ENCODE measurements at regions of chr15 and their contacts with region 1.

Region 1: DNA sequence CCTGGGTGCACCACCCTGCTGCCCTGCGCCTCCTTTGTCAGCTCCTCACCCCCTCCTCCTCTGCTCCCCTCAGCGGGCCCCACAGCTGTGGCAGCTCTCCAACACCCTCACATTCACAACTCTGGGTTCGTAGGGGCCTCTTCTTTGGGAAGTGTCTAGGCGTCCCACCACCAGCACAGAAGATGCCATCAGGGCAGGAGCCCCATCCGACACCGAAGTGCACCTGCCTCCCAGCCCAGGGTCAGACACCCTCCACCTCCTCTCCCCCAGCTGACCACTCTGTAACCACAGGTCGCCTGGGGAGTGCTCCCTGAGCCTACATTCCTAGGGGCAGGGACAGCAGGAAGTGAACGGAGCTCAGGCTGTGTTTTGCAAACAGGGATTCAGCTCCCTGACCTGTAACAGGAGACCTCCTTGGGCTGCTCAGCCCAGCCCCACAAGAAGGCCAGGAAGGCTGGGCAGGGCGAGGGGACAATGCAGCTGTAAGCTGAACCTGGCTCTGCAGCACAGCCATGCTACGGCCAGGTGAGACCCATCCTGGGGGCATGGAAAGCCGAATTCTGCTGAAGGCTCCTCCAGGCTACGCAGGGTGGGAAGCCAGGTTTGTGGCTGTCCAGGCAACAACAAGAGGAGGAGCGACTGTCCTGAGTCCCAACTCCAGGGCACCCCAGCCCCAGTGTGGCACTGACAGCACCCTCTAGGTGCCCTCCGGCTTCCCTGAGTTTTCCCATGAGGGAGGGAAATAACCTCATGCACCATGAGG is 269.0 kb downstream of the GOLGA6L6 start:
- DNase-seq: no peak
- ATAC-seq: no peak
- H3K4me3 ChIP-seq: no peak overlapping the region
- H3K4me3 Mint-ChIP-seq: no peak overlapping the region
- H3K27ac ChIP-seq: no peak overlapping the region
- H3K27ac Mint-ChIP-seq: no peak overlapping the region
- H3K4me1 ChIP-seq: no peaks in the 10 kb centered on the region
- H3K4me1 Mint-ChIP-seq: no peaks in the 10 kb centered on the region
- H3K27me3 ChIP-seq: peaks cover 0 to 9% of the 10 kb centered on the region in 2 experiments
- H3K27me3 Mint-ChIP-seq: no peaks in the 10 kb centered on the region
- CTCF ChIP-seq: no peak

Region 2: DNA sequence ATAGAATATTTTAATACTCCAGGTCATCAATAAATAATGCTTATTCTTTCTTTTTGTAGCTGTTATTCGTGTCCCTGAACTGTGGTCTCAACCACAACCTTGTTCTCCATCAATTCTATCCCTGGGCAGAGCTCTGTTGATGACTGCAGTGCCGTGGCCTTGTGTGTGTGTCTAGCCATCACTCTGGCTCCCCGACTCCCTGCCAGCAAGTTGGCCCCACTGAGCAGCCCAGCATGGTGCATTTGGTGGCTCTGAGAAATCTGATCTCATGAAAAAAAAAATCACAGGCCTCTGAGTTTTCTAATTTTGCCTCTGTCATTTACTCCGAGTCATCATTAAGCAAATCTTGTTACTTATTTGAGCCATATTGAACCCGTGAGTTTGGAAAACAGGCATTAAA is 104.3 kb after region 1 on chr15:
- CTCF ChIA-PET with region 1: no interaction called
- POLR2A ChIA-PET with region 1: no interaction called
- intact Hi-C with region 1: loop called in 1 of 2 experiments (anchors 10 kb)
- DNase-seq: no peak
- ATAC-seq: no peak
- H3K4me3 ChIP-seq: no peak overlapping the region
- H3K4me3 Mint-ChIP-seq: no peak overlapping the region
- H3K27ac ChIP-seq: no peak overlapping the region
- H3K27ac Mint-ChIP-seq: no peak overlapping the region
- H3K4me1 ChIP-seq: no peaks in the 10 kb centered on the region
- H3K4me1 Mint-ChIP-seq: no peaks in the 10 kb centered on the region
- H3K27me3 ChIP-seq: no peaks in the 10 kb centered on the region
- H3K27me3 Mint-ChIP-seq: no peaks in the 10 kb centered on the region
- CTCF ChIP-seq: no peak